ENCODE measurements at regions of chrX and their contacts with region 1.

Region 1: GRCh38 chrX:19739683-19740082 is 147.7 kb downstream of the SH3KBP1 start:
- DNase-seq: no peak
- ATAC-seq: peak; percentile 18; the same call in 2 of the 3 replicates
- H3K4me3 ChIP-seq: no peak overlapping the region
- H3K27ac ChIP-seq: no peak overlapping the region
- H3K4me1 ChIP-seq: peaks cover 28% of the 10 kb centered on the region
- H3K27me3 ChIP-seq: no peaks in the 10 kb centered on the region
- CTCF ChIP-seq: peak; percentile 56 to 72 (median 71)
- EP300 ChIP-seq: no peak
- POLR2A ChIP-seq: no peak
- RAD21 ChIP-seq: peak; percentile 73

Region 2: DNA sequence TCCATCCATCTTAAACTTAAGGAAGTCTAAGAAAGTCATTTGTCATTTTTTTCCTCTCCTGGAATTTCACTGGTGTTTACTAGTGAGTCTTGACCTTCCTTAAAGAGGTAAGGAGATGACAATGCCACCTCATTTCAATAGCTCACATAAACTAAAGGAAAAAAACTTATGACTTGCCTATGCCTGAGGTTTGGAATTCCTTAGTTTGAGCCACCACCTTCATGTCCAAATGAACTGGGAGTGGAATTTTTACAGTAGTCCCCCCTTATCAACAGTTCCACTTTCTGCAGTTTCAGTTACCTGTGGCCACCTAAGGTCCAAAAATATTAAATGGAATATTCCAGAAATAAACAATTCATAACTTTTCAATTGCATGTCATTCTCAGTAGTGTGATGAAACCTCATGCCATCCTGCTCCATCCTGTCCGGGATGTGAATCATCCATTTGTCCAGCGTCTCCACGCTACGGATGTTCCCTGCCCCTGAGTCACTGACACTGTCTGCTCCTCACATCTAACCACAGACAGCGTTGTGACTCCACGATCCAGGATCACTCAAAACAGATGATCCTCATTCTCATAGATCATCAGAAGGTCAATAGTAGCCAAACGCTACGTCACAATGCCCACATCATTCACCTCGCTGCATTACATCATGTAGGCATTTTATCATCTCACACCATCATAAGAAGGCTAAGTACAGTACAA is 29.7 kb before region 1 on chrX:
- CTCF ChIA-PET with region 1: interaction called, 11 read pairs
- POLR2A ChIA-PET with region 1: no interaction called
- RAD21 ChIA-PET with region 1: no interaction called
- SMC1A ChIA-PET with region 1: no interaction called
- in situ Hi-C with region 1: no loop called
- intact Hi-C with region 1: no loop called
- DNase-seq: no peak
- ATAC-seq: no peak
- H3K4me3 ChIP-seq: no peak overlapping the region
- H3K27ac ChIP-seq: no peak overlapping the region
- H3K4me1 ChIP-seq: peaks cover 10% of the 10 kb centered on the region
- H3K27me3 ChIP-seq: no peaks in the 10 kb centered on the region
- CTCF ChIP-seq: no peak
- EP300 ChIP-seq: no peak
- POLR2A ChIP-seq: no peak
- RAD21 ChIP-seq: no peak

Region 3: GRCh38 chrX:19725641-19726040 is 14.0 kb before region 1 on chrX:
- CTCF ChIA-PET with region 1: interaction called, 28 read pairs
- POLR2A ChIA-PET with region 1: interaction called, 4 read pairs
- RAD21 ChIA-PET with region 1: interaction called, 14 read pairs
- SMC1A ChIA-PET with region 1: interaction called, 100 read pairs
- in situ Hi-C with region 1: no loop called
- intact Hi-C with region 1: no loop called
- DNase-seq: no peak
- ATAC-seq: peak; percentile 18
- H3K4me3 ChIP-seq: no peak overlapping the region
- H3K27ac ChIP-seq: no peak overlapping the region
- H3K4me1 ChIP-seq: peaks cover 2% of the 10 kb centered on the region
- H3K27me3 ChIP-seq: no peaks in the 10 kb centered on the region
- CTCF ChIP-seq: no peak
- EP300 ChIP-seq: no peak
- POLR2A ChIP-seq: no peak; the same call in 1 of the 2 replicates
- RAD21 ChIP-seq: no peak

Region 4: GRCh38 chrX:19753368-19753767 is 13.7 kb after region 1 on chrX:
- CTCF ChIA-PET with region 1: interaction called, 14 read pairs
- POLR2A ChIA-PET with region 1: interaction called, 13 read pairs
- RAD21 ChIA-PET with region 1: interaction called, 65 read pairs
- SMC1A ChIA-PET with region 1: interaction called, 624 read pairs
- in situ Hi-C with region 1: no loop called
- intact Hi-C with region 1: no loop called
- DNase-seq: no peak
- ATAC-seq: no peak
- H3K4me3 ChIP-seq: no peak overlapping the region
- H3K27ac ChIP-seq: peak overlapping the region; percentile 50; the same call in 1 of the 2 replicates
- H3K4me1 ChIP-seq: peaks cover 40% of the 10 kb centered on the region
- H3K27me3 ChIP-seq: no peaks in the 10 kb centered on the region
- CTCF ChIP-seq: no peak
- EP300 ChIP-seq: no peak
- POLR2A ChIP-seq: no peak
- RAD21 ChIP-seq: no peak

Region 5: GRCh38 chrX:19758539-19758938 is 18.9 kb after region 1 on chrX:
- CTCF ChIA-PET with region 1: interaction called, 14 read pairs
- POLR2A ChIA-PET with region 1: interaction called, 13 read pairs
- RAD21 ChIA-PET with region 1: interaction called, 65 read pairs
- SMC1A ChIA-PET with region 1: interaction called, 624 read pairs
- in situ Hi-C with region 1: no loop called
- intact Hi-C with region 1: no loop called
- DNase-seq: no peak
- ATAC-seq: peak; percentile 69
- H3K4me3 ChIP-seq: no peak overlapping the region
- H3K27ac ChIP-seq: peak overlapping the region; percentile 13; the same call in 1 of the 2 replicates
- H3K4me1 ChIP-seq: peaks cover 46% of the 10 kb centered on the region
- H3K27me3 ChIP-seq: no peaks in the 10 kb centered on the region
- CTCF ChIP-seq: no peak
- EP300 ChIP-seq: no peak
- POLR2A ChIP-seq: no peak
- RAD21 ChIP-seq: no peak

Region 6: GRCh38 chrX:19799319-19800182 is 59.9 kb after region 1 on chrX:
- CTCF ChIA-PET with region 1: interaction called, 5 read pairs
- POLR2A ChIA-PET with region 1: no interaction called
- RAD21 ChIA-PET with region 1: interaction called, 3 read pairs
- SMC1A ChIA-PET with region 1: interaction called, 10 read pairs
- in situ Hi-C with region 1: no loop called
- intact Hi-C with region 1: no loop called
- DNase-seq: no peak
- ATAC-seq: no peak
- H3K4me3 ChIP-seq: peak overlapping the region; percentile 8; the same call in 1 of the 2 replicates
- H3K27ac ChIP-seq: peak overlapping the region; percentile 73
- H3K4me1 ChIP-seq: peaks cover 19% of the 10 kb centered on the region
- H3K27me3 ChIP-seq: no peaks in the 10 kb centered on the region
- CTCF ChIP-seq: no peak
- EP300 ChIP-seq: no peak
- POLR2A ChIP-seq: no peak
- RAD21 ChIP-seq: no peak

Region 7: GRCh38 chrX:19846995-19847790 is 107.5 kb after region 1 on chrX:
- CTCF ChIA-PET with region 1: interaction called, 7 read pairs
- POLR2A ChIA-PET with region 1: interaction called, 25 read pairs
- RAD21 ChIA-PET with region 1: interaction called, 17 read pairs
- SMC1A ChIA-PET with region 1: interaction called, 5 read pairs
- in situ Hi-C with region 1: no loop called
- intact Hi-C with region 1: no loop called
- DNase-seq: no peak
- ATAC-seq: peak; percentile 55
- H3K4me3 ChIP-seq: 0 out of 2 replicates have a peak overlapping the region, but pooled peaks have one; percentile 8
- H3K27ac ChIP-seq: peak overlapping the region; percentile 79
- H3K4me1 ChIP-seq: peaks cover 38% of the 10 kb centered on the region
- H3K27me3 ChIP-seq: no peaks in the 10 kb centered on the region
- CTCF ChIP-seq: no peak
- EP300 ChIP-seq: no peak
- POLR2A ChIP-seq: no peak
- RAD21 ChIP-seq: no peak

Region 8: GRCh38 chrX:20224814-20225487 is 485.3 kb after region 1 on chrX:
- CTCF ChIA-PET with region 1: no interaction called
- POLR2A ChIA-PET with region 1: no interaction called
- RAD21 ChIA-PET with region 1: no interaction called
- SMC1A ChIA-PET with region 1: no interaction called
- in situ Hi-C with region 1: no loop called
- intact Hi-C with region 1: no loop called
- DNase-seq: peak; percentile 35
- ATAC-seq: peak; percentile 95
- H3K4me3 ChIP-seq: no peak overlapping the region
- H3K27ac ChIP-seq: no peak overlapping the region; the same call in 1 of the 2 replicates
- H3K4me1 ChIP-seq: peaks cover 5% of the 10 kb centered on the region; the same call in 1 of the 2 replicates
- H3K27me3 ChIP-seq: no peaks in the 10 kb centered on the region
- CTCF ChIP-seq: peak in 1 of 3 experiments; percentile 19; a peak in 1 of 6 replicates
- EP300 ChIP-seq: no peak; a peak in 1 of 4 replicates
- POLR2A ChIP-seq: no peak
- RAD21 ChIP-seq: peak; percentile 38; the same call in 1 of the 2 replicates

Measured in GM12878 (cell line).